Caco-2 (cell line): ENCODE measurements at regions of chr11 and their contacts with region 1.

Region 1: GRCh38 chr11:75214411-75214821 is 26.2 kb upstream of the TPBGL start:
- DNase-seq: peak; percentile 95 to 97
- H3K4me3 ChIP-seq: no peak overlapping the region
- H3K4me3 Mint-ChIP-seq: no peak overlapping the region
- H3K27ac Mint-ChIP-seq: no peak overlapping the region
- H3K4me1 ChIP-seq: no peaks in the 10 kb centered on the region
- H3K4me1 Mint-ChIP-seq: no peaks in the 10 kb centered on the region
- H3K27me3 ChIP-seq: no peaks in the 10 kb centered on the region
- H3K27me3 Mint-ChIP-seq: peaks cover 23% of the 10 kb centered on the region
- CTCF ChIP-seq: peak; percentile 78 to 95

Region 2: GRCh38 chr11:75147875-75148263 is 66.5 kb before region 1 on chr11:
- CTCF ChIA-PET with region 1: interaction called, 887 read pairs
- POLR2A ChIA-PET with region 1: no interaction called
- intact Hi-C with region 1: no loop called
- DNase-seq: no peak
- H3K4me3 ChIP-seq: no peak overlapping the region
- H3K4me3 Mint-ChIP-seq: no peak overlapping the region
- H3K27ac Mint-ChIP-seq: peak overlapping the region; percentile 75
- H3K4me1 ChIP-seq: peaks cover 91% of the 10 kb centered on the region
- H3K4me1 Mint-ChIP-seq: peaks cover 59% of the 10 kb centered on the region
- H3K27me3 ChIP-seq: no peaks in the 10 kb centered on the region
- H3K27me3 Mint-ChIP-seq: no peaks in the 10 kb centered on the region
- CTCF ChIP-seq: no peak

Region 3: DNA sequence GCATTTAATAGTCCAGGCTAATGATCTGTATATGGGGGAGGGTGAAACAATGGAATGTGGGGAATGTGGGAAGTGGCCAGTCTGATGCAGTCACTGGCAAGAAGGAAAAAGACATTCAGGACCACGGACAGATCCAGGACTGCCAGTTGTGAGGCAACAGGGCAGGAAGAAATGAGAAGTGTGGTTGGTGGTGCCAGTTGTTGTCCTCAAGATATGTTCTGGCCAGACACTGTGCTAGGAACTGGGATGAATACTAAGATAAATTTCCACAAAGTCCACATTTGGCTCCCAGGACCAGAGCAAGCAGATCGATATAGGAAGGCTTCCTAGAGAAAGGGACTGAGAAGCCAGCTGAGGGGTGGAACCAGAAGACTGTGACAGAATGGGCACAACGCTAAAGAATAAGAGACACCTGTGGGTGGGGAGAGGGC is 19.3 kb after region 1 on chr11:
- CTCF ChIA-PET with region 1: interaction called, 14 read pairs
- POLR2A ChIA-PET with region 1: no interaction called
- intact Hi-C with region 1: loop called (anchors 1 kb)
- DNase-seq: peak; percentile 77 to 92
- H3K4me3 ChIP-seq: no peak overlapping the region
- H3K4me3 Mint-ChIP-seq: no peak overlapping the region
- H3K27ac Mint-ChIP-seq: no peak overlapping the region
- H3K4me1 ChIP-seq: no peaks in the 10 kb centered on the region
- H3K4me1 Mint-ChIP-seq: no peaks in the 10 kb centered on the region
- H3K27me3 ChIP-seq: no peaks in the 10 kb centered on the region; the same call in none of the 2 replicates
- H3K27me3 Mint-ChIP-seq: peaks cover 16% of the 10 kb centered on the region
- CTCF ChIP-seq: no peak

Region 4: DNA sequence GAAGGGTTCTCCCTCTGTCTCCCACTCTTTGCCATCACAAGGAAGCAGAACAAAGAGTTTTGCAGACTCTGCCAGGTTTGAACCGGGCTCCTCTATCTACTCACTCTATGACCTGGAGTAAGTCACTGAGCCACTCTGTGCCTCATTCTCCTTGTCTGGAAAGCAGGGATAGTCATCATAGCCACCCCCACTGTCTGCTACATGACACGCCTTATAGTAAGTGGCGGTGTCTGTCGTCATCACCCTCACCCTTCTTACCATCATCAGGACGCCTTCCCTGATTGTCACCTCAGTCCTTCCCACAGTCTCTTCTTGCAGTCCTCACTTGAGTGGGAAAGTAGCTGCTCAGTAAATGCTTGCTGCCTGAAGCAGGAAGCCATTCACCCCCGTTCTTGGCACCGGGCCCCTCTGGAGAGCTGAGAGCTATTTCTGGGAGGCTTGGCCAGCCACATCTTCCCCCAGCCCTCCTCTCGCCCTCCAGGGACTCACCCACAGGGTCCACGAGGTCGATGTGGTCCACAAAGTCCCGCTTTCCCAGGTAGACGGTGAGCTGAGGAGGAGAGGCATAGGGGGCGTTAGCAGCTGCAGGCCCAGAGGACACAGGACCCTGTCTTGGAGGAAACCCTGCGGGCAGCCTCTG is 72.5 kb after region 1 on chr11:
- CTCF ChIA-PET with region 1: no interaction called
- POLR2A ChIA-PET with region 1: no interaction called
- intact Hi-C with region 1: no loop called
- DNase-seq: no peak
- H3K4me3 ChIP-seq: no peak overlapping the region
- H3K4me3 Mint-ChIP-seq: no peak overlapping the region
- H3K27ac Mint-ChIP-seq: no peak overlapping the region
- H3K4me1 ChIP-seq: no peaks in the 10 kb centered on the region
- H3K4me1 Mint-ChIP-seq: peaks cover 7% of the 10 kb centered on the region
- H3K27me3 ChIP-seq: no peaks in the 10 kb centered on the region
- H3K27me3 Mint-ChIP-seq: no peaks in the 10 kb centered on the region
- CTCF ChIP-seq: no peak

Region 5: DNA sequence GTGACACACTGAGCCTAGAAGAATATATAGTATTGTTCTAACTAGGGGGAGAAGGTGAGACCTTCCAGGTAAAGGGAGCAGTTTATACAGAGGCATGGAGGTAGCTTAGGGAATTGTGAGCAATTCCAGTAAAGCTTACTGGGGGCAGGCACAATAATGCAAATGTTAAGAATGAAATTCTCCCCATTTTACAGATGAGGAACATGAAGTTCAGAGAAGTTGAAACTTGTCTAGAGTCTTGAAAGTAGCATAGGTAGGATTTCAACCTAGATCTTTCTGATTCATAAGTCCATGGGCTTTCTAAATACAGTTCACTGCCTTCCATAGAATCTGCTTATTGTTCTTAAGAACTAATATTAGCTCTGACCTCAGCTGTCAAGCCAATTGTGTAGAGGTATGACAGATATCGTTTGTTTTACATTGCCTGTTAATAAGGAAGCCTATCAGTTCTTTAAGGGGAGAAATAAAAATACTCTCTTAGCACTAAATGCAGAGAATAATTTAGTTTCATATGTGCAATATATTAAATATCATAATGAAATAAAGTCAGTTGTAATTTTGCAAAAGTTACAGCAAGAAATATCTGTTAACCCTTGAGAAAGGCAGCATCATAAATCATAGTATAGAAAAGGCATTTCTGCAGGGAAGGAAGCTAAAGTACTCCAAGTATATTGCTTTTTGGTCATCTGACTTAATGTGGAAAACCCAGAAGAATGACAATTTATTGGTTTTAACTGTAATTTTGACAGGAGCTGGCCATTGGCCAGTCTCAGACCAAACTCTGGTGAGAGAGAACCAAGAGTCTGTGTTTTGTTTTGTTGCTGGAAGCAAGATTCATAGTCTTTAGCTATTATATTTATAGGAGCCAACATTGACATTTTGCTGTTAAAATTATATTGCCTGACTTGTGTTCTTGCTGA is 782.4 kb after region 1 on chr11:
- CTCF ChIA-PET with region 1: no interaction called
- POLR2A ChIA-PET with region 1: no interaction called
- intact Hi-C with region 1: no loop called
- DNase-seq: no peak
- H3K4me3 ChIP-seq: no peak overlapping the region
- H3K4me3 Mint-ChIP-seq: no peak overlapping the region
- H3K27ac Mint-ChIP-seq: no peak overlapping the region
- H3K4me1 ChIP-seq: no peaks in the 10 kb centered on the region
- H3K4me1 Mint-ChIP-seq: no peaks in the 10 kb centered on the region
- H3K27me3 ChIP-seq: no peaks in the 10 kb centered on the region
- H3K27me3 Mint-ChIP-seq: no peaks in the 10 kb centered on the region
- CTCF ChIP-seq: no peak